Left cardiac atrium (tissue), 4 donors: ENCODE measurements at regions of chr13 and their contacts with region 1.

Region 1: GRCh38 chr13:110499621-110500281 is 61.8 kb downstream of the RAB20 start:
- DNase-seq: no peak
- ATAC-seq: no peak

Region 2: GRCh38 chr13:110455941-110456340 is 43.8 kb before region 1 on chr13:
- intact Hi-C with region 1: loop called in 1 of 2 experiments (anchors 5 kb)
- DNase-seq: peak; percentile 79
- ATAC-seq: peak; percentile 88